KBM-7 (cell line): ENCODE measurements at regions of chrX and their contacts with region 1.

Region 1: DNA sequence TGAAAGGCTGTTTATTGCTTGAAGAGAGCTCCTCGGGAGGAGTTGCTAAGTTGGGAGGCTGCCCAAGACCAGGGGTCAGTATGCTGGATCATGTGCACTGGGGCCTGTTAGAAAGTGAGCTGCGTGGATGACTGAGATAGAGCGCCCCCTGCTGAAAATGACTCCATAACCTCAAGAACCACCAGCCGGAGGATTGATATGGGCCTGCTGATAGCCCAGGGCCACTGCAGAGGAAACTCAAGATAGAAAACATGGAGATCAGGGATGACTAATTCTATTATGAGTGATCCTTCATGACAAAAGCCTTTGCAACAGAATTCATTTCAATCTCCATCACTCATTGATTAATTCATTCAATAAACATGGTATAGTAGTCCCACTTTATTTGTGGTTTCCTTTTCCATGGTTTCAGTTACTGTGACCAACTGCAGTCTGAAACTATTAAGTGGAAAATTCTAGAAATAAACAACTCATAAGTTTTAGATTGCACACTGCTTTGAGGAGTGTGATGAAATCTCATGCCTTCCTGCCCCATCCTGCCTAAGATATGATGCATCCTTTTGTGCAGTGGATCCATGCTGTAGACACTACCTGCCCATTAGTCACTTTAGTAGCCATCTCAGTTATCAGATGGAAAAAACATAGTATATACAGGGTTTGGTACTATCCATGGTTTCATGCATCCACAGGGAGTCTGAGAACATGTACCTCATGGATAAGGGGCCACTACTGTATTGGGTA is 126.7 kb upstream of the MBNL3 start:
- DNase-seq: peak; percentile 76

Region 2: GRCh38 chrX:131830400-131831184 is 785.0 kb before region 1 on chrX:
- in situ Hi-C with region 1: loop called (anchors 10 kb)
- DNase-seq: peak; percentile 98

Region 3: GRCh38 chrX:132092439-132093065 is 523.0 kb before region 1 on chrX:
- in situ Hi-C with region 1: loop called (anchors 25 kb)
- DNase-seq: peak; percentile 80

Region 4: GRCh38 chrX:132107291-132107690 is 508.3 kb before region 1 on chrX:
- in situ Hi-C with region 1: no loop called
- DNase-seq: no peak

Region 5: DNA sequence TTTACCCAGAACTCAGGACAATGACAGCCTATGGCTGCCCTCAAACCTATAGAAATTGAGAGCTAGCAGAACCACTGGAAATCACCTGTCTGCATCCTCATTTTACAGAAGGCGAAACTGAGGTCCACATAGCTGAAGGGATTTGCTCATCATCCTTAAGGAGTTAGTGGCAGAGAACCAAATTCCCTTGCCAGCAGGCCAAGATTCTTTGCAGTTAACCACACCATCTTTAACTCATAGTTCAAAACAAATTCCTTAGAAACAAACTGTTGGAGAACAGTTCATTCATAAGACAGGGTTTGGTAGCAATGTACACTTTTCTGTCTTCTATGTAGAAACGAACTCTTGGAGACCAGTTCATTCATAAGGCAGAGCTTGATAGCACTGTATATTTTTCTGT is 358.4 kb before region 1 on chrX:
- in situ Hi-C with region 1: no loop called
- DNase-seq: no peak

Region 6: GRCh38 chrX:132292793-132293192 is 322.8 kb before region 1 on chrX:
- in situ Hi-C with region 1: loop called (anchors 25 kb)
- DNase-seq: peak; percentile 59